Heart left ventricle (tissue), 16 donors: ENCODE measurements at regions of chr5 and their contacts with region 1.

Region 1: GRCh38 chr5:177599731-177600507 is at the start of gene B4GALT7:
- DNase-seq: peak; percentile 88 to 94 (median 88)
- ATAC-seq: peak; percentile 78 to 97 (median 94)
- H3K4me3 ChIP-seq: peak within 1 kb of the TSS; percentile 83 to 100 (median 90)
- H3K27ac ChIP-seq: peak within 1 kb of the TSS; percentile 58 to 93 (median 88)
- H3K4me1 ChIP-seq: peaks cover 3 to 28% (median 13%) of the 10 kb centered on the region in 12 donors
- H3K27me3 ChIP-seq: no peaks in the 10 kb centered on the region
- CTCF ChIP-seq: no peak
- POLR2A ChIP-seq: peak; percentile 57 to 88
- total RNA-seq, gene B4GALT7: 10.5 to 23.5 (median 17.7) TPM

Region 2: GRCh38 chr5:177403792-177404640 is 195.9 kb before region 1 on chr5:
- intact Hi-C with region 1: loop called in 1 of 10 experiments (anchors 10 kb)
- DNase-seq: peak; percentile 85 to 93 (median 87)
- ATAC-seq: peak; percentile 85 to 97 (median 94)
- H3K4me3 ChIP-seq: peak overlapping the region; percentile 32 to 64 (median 56)
- H3K27ac ChIP-seq: peak overlapping the region in 2 of 12 donors; percentile 25 to 35
- H3K4me1 ChIP-seq: peaks cover 8 to 51% (median 32%) of the 10 kb centered on the region in 12 donors
- H3K27me3 ChIP-seq: peaks cover 39 to 63% (median 50%) of the 10 kb centered on the region in 9 donors
- CTCF ChIP-seq: peak; percentile 63 to 85 (median 68)
- POLR2A ChIP-seq: no peak

Region 3: DNA sequence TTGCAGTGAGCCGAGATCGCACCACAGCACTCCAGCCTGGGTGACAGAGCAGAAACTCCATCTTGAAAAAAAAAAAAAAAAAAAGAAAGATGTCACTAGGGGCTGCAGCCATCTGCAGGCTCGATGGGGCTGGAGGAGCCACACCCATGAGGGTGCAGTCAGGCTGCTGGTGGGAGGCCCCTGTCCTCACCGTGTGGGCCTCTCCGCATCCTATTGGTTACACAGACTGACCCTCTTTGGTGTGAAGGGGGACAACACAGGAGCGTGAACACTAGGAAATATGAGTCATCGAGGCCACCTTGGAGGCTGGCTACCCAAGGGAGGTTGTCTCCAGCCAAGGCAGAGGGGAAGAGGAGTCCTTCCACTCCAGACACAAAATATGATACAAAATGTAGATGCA is 31.6 kb before region 1 on chr5:
- intact Hi-C with region 1: no loop called
- DNase-seq: no peak
- ATAC-seq: no peak
- H3K4me3 ChIP-seq: no peak overlapping the region
- H3K27ac ChIP-seq: no peak overlapping the region
- H3K4me1 ChIP-seq: no peaks in the 10 kb centered on the region
- H3K27me3 ChIP-seq: peaks cover 0 to 11% (median 0%) of the 10 kb centered on the region in 9 donors
- CTCF ChIP-seq: no peak
- POLR2A ChIP-seq: no peak

Region 4: DNA sequence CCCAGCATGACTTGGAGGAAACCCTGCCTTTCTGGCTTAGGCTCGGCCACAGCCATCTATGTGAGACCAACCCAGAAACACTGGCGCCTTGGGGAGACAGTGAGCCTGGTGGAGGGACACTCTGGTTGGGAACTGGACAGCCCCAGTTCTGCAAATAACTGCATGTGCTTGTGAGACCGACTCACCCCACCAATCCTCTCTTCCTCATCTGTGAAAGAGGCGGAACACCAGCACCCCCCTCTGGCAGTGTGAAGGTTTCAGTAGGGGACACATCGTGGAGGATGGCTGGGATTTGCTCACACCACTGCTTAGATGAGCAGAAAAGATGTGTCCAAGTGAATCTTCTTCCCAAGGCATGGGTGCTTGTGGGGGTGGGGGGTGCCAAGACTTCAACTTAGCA is 470.0 kb after region 1 on chr5:
- intact Hi-C with region 1: loop called in 2 of 10 experiments (anchors 10 kb)
- DNase-seq: no peak
- ATAC-seq: no peak
- H3K4me3 ChIP-seq: no peak overlapping the region
- H3K27ac ChIP-seq: no peak overlapping the region
- H3K4me1 ChIP-seq: no peaks in the 10 kb centered on the region
- H3K27me3 ChIP-seq: peaks cover 0 to 34% (median 9%) of the 10 kb centered on the region in 9 donors
- CTCF ChIP-seq: peak in 1 of 12 donors; percentile 17
- POLR2A ChIP-seq: no peak

Region 5: GRCh38 chr5:178259623-178260536 is 660.0 kb after region 1 on chr5:
- intact Hi-C with region 1: no loop called
- DNase-seq: peak in 2 of 5 donors; percentile 13 to 37
- ATAC-seq: no peak
- H3K4me3 ChIP-seq: no peak overlapping the region
- H3K27ac ChIP-seq: no peak overlapping the region
- H3K4me1 ChIP-seq: no peaks in the 10 kb centered on the region
- H3K27me3 ChIP-seq: no peaks in the 10 kb centered on the region
- CTCF ChIP-seq: no peak
- POLR2A ChIP-seq: no peak